Activated CD4-positive, alpha-beta memory T cell treated with anti-CD3 and anti-CD28 coated beads for 36 hours (primary cell): ENCODE measurements at regions of chr3 and their contacts with region 1.

Region 1: DNA sequence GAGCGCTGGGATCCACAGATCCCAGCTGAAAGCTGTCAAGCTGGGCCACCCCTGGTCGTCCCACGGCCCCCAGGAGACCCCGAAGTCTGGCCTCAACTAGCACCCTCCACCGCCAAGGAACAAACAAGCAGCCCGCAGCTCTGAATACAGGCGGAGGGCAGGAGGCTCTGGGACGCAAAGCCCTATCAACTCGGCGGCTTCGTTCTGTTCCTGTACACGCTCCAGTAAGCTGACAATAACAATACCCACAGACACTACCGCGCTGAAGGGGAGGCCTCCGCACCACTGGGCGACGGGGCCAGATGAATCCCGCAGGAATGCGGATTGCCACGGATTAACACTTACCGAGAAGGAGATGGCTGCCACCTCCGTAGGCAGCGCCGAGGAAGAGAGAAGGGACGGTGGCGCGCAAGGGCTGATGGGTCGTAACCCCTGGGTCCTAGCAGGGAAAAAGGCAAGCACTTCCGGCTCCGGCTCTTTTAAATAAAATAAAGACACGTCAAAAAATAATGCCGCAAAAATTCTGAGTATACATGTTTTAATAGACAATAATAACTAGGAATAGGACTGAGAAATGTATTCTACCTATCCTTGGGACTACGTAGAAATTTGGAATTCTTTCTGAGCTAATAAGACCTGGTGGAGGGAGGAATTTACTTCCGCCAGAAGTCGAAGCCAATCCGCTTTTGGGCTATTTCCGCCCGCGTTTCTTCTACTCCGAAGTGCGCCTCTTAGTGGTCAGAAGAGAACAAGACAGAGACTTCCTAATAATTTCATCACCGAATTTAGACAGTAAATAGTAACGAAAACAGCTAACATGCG is at the start of gene RPL32:
- DNase-seq: peak; percentile 89
- H3K4me3 Mint-ChIP-seq: peak within 1 kb of the TSS; percentile 93
- H3K27ac Mint-ChIP-seq: peak within 1 kb of the TSS; percentile 98
- H3K4me1 Mint-ChIP-seq: peaks cover 41% of the 10 kb centered on the region
- H3K27me3 Mint-ChIP-seq: no peaks in the 10 kb centered on the region
- total RNA-seq, gene RPL32: 2,505 to 2,560 TPM

Region 2: GRCh38 chr3:12663936-12664908 is 177.1 kb before region 1 on chr3 and contains the start of gene RAF1:
- CTCF ChIA-PET with region 1: interaction called, 4 read pairs
- POLR2A ChIA-PET with region 1: interaction called, 3 read pairs
- intact Hi-C with region 1: loop called (anchors 1 kb)
- DNase-seq: peak; percentile 98
- H3K4me3 Mint-ChIP-seq: peak within 1 kb of the TSS; percentile 88
- H3K27ac Mint-ChIP-seq: peak within 1 kb of the TSS; percentile 87
- H3K4me1 Mint-ChIP-seq: peaks cover 29% of the 10 kb centered on the region
- H3K27me3 Mint-ChIP-seq: no peaks in the 10 kb centered on the region
- total RNA-seq, gene RAF1: 64.6 to 66.9 TPM

Region 3: GRCh38 chr3:12700800-12701199 is 140.6 kb before region 1 on chr3:
- CTCF ChIA-PET with region 1: no interaction called
- POLR2A ChIA-PET with region 1: no interaction called
- intact Hi-C with region 1: no loop called
- DNase-seq: no peak
- H3K4me3 Mint-ChIP-seq: no peak overlapping the region
- H3K27ac Mint-ChIP-seq: no peak overlapping the region
- H3K4me1 Mint-ChIP-seq: no peaks in the 10 kb centered on the region
- H3K27me3 Mint-ChIP-seq: no peaks in the 10 kb centered on the region

Region 4: GRCh38 chr3:12782172-12782815 is 59.1 kb before region 1 on chr3:
- CTCF ChIA-PET with region 1: interaction called, 10 read pairs
- POLR2A ChIA-PET with region 1: no interaction called
- intact Hi-C with region 1: no loop called
- DNase-seq: no peak
- H3K4me3 Mint-ChIP-seq: no peak overlapping the region
- H3K27ac Mint-ChIP-seq: no peak overlapping the region
- H3K4me1 Mint-ChIP-seq: no peaks in the 10 kb centered on the region
- H3K27me3 Mint-ChIP-seq: peaks cover 19% of the 10 kb centered on the region

Region 5: DNA sequence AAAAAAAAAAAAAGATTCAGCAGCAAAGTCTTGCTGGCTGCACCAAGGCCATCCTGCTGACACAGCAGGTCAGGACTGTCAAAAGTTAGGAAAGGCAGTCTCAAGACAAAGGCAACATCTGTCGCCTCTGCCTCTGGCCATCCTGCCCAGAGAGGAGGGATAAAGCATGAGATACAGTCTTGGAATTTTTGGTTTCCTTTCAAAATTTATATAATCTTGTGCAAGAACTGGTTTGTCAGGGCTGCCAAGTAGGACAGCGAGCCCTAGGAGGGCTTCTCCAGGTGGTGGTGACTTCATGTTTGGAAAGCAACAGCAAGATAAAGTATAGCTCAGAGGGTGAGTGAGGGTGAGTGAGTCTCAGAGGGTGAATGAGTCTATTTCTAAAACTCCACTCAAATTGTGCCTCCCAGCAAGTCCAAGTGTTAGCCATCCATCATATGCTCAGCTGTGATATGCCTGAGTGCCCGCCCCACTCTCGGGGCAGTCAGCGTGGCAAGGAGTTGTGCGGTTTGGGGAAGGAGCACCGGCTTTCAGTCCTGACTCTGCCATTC is 11.9 kb after region 1 on chr3:
- CTCF ChIA-PET with region 1: interaction called, 12 read pairs
- POLR2A ChIA-PET with region 1: no interaction called
- intact Hi-C with region 1: no loop called
- DNase-seq: no peak
- H3K4me3 Mint-ChIP-seq: no peak overlapping the region
- H3K27ac Mint-ChIP-seq: no peak overlapping the region
- H3K4me1 Mint-ChIP-seq: no peaks in the 10 kb centered on the region
- H3K27me3 Mint-ChIP-seq: peaks cover 4% of the 10 kb centered on the region

Region 6: GRCh38 chr3:12886106-12886679 is 44.8 kb after region 1 on chr3:
- CTCF ChIA-PET with region 1: interaction called, 14 read pairs
- POLR2A ChIA-PET with region 1: no interaction called
- intact Hi-C with region 1: no loop called
- DNase-seq: peak; percentile 29
- H3K4me3 Mint-ChIP-seq: no peak overlapping the region
- H3K27ac Mint-ChIP-seq: no peak overlapping the region
- H3K4me1 Mint-ChIP-seq: peaks cover 9% of the 10 kb centered on the region
- H3K27me3 Mint-ChIP-seq: peaks cover 18% of the 10 kb centered on the region